Adrenal gland (tissue), 19 donors: ENCODE measurements at regions of chr12 and their contacts with region 1.

Region 1: DNA sequence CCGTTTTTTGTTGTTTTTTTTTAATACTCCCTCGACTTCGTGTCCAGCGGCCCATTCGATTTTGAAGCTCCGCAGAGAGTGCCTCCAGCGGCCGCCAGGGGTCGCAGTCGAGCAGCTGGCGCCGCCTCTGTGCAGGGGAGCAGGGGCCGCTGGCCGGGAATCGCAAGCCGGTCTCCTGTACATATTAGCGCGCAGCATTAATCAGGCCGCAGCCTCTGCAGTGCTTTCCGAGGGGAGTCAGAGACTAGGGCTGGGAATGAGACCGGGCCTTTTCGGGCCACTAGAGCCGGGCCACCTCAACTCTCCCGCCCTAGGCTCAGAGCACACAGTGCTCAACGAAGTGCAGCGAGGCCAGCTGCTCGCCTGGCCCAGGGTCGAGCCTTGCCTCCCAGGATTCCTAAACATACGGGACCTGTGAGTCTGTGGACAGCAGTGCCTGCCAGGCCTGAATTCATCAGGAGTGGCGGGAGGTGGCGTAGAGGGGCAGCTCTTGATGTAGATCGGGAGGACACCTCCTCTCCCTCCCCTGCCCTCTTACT is 81.8 kb downstream of the EMP1 start:
- DNase-seq: peak; percentile 43 to 83 (median 69)
- H3K4me3 ChIP-seq: peak overlapping the region in 1 of 4 donors; percentile 7
- H3K27ac ChIP-seq: no peak overlapping the region
- H3K4me1 ChIP-seq: peaks cover 0 to 9% of the 10 kb centered on the region in 2 donors
- H3K27me3 ChIP-seq: peaks cover 8% of the 10 kb centered on the region
- CTCF ChIP-seq: peak; percentile 86 to 100 (median 90)
- POLR2A ChIP-seq: no peak

Region 2: GRCh38 chr12:13326076-13326475 is 47.8 kb after region 1 on chr12:
- intact Hi-C with region 1: no loop called
- DNase-seq: peak in 2 of 7 donors; percentile 5 to 17
- H3K4me3 ChIP-seq: no peak overlapping the region
- H3K27ac ChIP-seq: no peak overlapping the region
- H3K4me1 ChIP-seq: no peaks in the 10 kb centered on the region
- H3K27me3 ChIP-seq: no peaks in the 10 kb centered on the region
- CTCF ChIP-seq: no peak
- POLR2A ChIP-seq: no peak

Region 3: GRCh38 chr12:13534645-13535398 is 256.5 kb after region 1 on chr12:
- intact Hi-C with region 1: loop called (anchors 5 to 10 kb)
- DNase-seq: peak; percentile 44 to 78 (median 64)
- H3K4me3 ChIP-seq: no peak overlapping the region
- H3K27ac ChIP-seq: no peak overlapping the region
- H3K4me1 ChIP-seq: no peaks in the 10 kb centered on the region
- H3K27me3 ChIP-seq: no peaks in the 10 kb centered on the region
- CTCF ChIP-seq: peak; percentile 65 to 82 (median 70)
- POLR2A ChIP-seq: no peak

Region 4: GRCh38 chr12:13652105-13652504 is 373.8 kb after region 1 on chr12:
- intact Hi-C with region 1: loop called in 1 of 2 experiments (anchors 10 kb)
- DNase-seq: no peak
- H3K4me3 ChIP-seq: no peak overlapping the region
- H3K27ac ChIP-seq: no peak overlapping the region
- H3K4me1 ChIP-seq: no peaks in the 10 kb centered on the region
- H3K27me3 ChIP-seq: peaks cover 4% of the 10 kb centered on the region
- CTCF ChIP-seq: no peak
- POLR2A ChIP-seq: no peak

Region 5: DNA sequence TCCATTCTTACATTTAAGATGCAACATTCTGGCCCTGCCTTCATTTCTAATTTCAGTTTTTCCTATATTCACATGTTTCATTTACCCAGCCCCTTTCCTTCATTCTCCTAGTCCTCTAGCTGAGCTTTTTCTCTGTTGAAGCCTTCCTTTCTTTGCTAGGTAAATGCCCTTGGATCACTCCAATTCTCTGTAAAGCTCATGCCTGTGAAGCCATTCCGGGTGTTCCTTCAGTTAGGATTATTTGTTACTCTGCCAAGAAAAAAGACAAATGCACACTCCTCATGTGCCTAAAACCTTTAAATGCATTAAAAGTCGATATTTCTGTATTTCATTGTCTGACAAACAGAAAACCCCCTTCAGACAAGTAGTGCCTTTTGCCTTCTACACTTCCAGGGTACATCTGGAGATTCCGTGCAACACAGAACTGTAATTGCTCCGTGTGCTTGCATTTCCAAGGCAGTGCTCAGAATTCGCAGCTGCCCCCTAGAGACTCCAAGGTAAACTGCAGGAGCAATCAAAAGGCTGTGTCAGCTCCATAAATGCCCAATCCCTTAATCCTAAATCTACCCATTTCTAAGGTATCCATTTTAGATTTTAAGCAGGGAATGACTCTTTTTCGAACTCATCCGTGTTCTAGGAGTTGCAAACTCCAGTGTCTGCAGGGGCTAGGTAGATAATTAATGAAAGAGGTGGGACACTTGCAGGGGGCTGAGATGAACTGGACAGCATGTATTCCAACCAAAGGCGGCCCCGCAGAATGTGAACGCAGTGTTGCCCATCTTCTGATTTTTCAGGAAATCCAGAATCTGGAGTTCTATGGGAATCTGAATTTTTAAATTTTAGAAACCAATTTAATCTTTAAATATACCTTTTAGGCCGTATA is 382.9 kb after region 1 on chr12:
- intact Hi-C with region 1: loop called (anchors 5 to 10 kb)
- DNase-seq: peak; percentile 37 to 76 (median 59)
- H3K4me3 ChIP-seq: no peak overlapping the region
- H3K27ac ChIP-seq: no peak overlapping the region
- H3K4me1 ChIP-seq: no peaks in the 10 kb centered on the region
- H3K27me3 ChIP-seq: peaks cover 4% of the 10 kb centered on the region
- CTCF ChIP-seq: peak; percentile 45 to 85 (median 68)
- POLR2A ChIP-seq: no peak